Activated T-helper 2 cell treated with anti-CD3 and anti-CD28 coated beads, Interferon-gamma antibody, Interleukin-2, Interleukin-4, amounts not matched to agents 10 μg/mL and 5 μg/mL and 100 μg/mL, durations not matched to agents 14 hours and 24 hours and 36 hours (primary cell): ENCODE measurements at regions of chr2 and their contacts with region 1.

Region 1: DNA sequence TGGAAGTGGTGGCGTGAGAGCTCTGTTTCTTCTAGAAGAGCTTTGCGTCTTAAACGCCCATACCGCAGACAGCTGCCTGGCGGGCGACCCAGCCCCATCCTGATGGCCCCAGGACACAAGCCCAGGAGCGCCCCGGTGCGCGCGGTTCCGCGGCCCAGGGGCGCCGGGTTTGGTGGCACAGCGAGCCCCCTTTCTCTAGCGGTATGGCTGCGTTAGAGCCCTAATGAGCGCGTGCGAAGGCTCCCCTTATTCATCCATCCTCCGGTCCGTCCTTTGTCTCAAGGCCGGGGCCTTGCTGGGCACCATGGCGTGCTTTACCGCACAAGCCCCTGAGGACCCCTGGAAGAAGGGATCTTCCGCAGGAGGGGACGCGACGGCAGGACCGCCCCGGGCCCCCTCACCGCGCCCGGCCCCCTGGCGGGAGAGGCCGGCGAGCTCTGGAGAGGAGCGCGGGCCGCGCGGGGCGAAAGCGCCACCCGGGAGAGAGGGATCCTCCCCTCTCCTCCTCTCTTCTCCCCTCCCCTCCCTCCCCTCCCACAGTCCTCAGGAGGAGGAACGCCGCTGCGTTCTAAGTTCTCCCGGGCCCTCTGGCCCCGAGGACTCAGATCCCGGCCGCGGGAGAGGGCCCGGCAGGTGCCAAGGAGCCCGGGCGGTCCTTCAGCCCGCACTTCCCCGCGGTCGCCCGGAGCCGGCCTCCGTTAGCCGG is 626 bp upstream of the SLC1A4 start:
- DNase-seq: peak; percentile 80
- H3K4me3 Mint-ChIP-seq: peak overlapping the region; percentile 84
- H3K27ac Mint-ChIP-seq: peak overlapping the region; percentile 90
- H3K4me1 Mint-ChIP-seq: peaks cover 65% of the 10 kb centered on the region
- H3K27me3 Mint-ChIP-seq: peaks cover 3% of the 10 kb centered on the region

Region 2: DNA sequence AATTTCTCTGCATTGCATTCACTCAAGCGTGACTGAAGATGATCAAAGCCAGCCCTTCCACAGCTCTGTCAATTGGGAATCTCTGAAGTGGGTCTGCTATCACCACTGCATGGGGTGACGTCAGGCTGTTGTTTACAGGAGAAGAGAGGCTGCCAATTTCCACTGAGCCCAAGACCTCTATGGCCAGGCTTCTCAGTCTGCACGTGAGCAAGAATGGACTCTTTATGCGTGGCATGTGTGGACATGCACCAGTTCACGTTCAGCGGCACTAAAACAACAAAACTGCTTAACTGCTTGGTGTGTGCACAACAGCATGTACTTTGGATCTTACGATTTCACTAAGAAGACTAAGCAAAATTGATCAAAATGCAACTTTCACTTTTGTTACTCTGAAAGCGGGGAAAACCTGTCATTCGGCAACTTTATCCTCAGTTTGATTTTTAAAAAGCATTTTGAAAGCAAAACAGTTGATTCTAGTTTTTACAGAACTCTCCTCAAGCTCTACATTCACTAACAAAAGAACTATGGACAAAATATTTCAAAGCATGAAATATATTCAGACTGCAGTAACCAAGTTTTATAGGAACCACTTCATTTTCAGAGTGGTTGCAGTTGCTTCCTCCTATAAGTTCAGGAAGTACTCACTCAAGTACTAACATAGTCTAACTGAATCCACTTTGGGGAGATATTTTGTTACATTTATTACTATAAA is 257.9 kb before region 1 on chr2:
- intact Hi-C with region 1: loop called (anchors 10 kb)
- DNase-seq: peak; percentile 31
- H3K4me3 Mint-ChIP-seq: peak overlapping the region; percentile 76
- H3K27ac Mint-ChIP-seq: peak overlapping the region; percentile 94
- H3K4me1 Mint-ChIP-seq: peaks cover 75% of the 10 kb centered on the region
- H3K27me3 Mint-ChIP-seq: no peaks in the 10 kb centered on the region

Region 3: DNA sequence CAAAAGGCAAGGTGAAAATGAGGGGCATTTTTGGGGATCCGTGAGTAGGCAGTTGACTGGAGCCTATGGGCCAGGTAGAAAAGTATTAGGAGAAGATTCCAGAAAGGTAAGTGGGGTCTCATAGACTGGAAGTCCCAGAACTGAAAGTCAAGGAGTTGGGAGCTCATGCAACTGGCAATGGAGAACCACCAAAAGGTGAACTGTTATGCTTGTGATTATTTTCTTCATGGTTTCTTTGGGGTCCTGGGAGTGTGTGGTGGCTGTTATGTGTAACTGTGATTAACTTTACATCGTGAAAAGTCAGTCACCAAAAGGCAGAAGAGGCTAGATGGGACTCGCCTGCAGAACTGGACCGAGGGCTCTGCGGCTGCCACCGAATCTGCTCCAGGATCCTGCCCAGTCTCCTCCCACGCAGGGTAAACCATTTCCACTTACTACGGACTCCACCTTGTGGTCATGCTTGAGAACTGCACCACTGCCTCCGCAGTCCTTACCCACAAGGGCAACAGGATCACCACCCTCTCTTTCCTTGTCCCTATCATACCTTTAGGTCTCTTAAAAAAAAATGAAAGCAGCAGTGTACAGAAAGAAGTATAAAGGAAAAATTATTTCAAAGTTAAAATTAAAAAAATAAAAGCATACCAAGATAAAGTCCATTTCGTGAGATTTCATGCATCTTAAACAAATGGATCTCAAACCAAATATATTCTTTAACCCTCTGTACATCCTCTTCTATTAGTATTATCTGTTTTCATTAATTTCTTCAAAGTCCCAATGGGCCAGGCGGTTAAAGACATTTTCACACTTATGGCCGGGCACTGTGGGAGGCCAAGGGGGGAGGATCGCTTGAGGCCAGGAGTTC is 52.1 kb after region 1 on chr2:
- intact Hi-C with region 1: loop called (anchors 2 kb)
- DNase-seq: peak; percentile 69
- H3K4me3 Mint-ChIP-seq: no peak overlapping the region
- H3K27ac Mint-ChIP-seq: no peak overlapping the region
- H3K4me1 Mint-ChIP-seq: peaks cover 20% of the 10 kb centered on the region
- H3K27me3 Mint-ChIP-seq: no peaks in the 10 kb centered on the region

Region 4: DNA sequence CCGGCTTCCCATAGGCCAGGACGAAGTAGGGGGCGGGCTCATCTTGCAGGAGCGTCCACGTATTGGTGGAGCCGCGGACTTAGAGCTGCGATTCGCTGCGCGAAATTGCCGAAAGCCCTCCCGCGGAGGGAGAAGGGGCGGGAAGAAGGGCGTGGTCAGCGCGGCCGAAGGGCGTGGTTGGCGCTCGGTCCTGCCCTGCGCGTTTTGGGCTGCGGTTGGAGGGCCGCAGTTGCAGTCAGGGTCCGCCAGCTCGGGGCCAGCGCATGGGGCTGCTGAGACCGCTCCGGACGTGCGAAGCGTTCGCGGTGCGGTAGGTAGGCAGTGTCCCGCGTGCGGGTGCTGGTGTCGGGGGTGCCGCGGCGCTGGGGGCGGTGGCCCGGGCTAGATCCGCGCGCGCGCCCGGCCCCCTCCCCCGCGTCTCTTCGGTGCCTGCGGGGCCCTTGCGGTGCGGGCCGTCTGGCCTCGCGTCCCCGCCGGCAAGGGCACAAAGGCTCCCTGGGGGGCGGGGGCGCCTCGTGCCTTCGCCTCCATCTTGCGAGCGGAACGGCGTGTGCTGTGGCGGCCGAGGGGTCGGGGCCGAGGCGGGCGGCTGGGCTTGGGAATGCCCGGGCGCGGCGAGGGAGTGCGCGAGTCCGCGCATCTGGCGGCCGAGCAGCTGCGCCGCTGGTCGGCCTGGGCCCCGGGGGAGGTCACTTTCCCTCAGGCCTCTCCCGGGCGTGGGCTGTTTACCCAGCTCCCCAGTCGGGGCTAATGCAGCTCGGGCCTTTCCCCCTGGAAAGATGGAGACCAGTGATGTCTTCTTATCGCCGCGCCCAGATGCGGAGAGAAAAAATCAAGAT is 67.9 kb after region 1 on chr2 and contains the start of gene CEP68:
- intact Hi-C with region 1: loop called (anchors 2 kb)
- DNase-seq: peak; percentile 96
- H3K4me3 Mint-ChIP-seq: peak within 1 kb of the TSS; percentile 92
- H3K27ac Mint-ChIP-seq: peak within 1 kb of the TSS; percentile 73
- H3K4me1 Mint-ChIP-seq: peaks cover 52% of the 10 kb centered on the region
- H3K27me3 Mint-ChIP-seq: no peaks in the 10 kb centered on the region
- total RNA-seq, gene CEP68: 5.9 and 6.1 TPM in 2 replicates

Region 5: DNA sequence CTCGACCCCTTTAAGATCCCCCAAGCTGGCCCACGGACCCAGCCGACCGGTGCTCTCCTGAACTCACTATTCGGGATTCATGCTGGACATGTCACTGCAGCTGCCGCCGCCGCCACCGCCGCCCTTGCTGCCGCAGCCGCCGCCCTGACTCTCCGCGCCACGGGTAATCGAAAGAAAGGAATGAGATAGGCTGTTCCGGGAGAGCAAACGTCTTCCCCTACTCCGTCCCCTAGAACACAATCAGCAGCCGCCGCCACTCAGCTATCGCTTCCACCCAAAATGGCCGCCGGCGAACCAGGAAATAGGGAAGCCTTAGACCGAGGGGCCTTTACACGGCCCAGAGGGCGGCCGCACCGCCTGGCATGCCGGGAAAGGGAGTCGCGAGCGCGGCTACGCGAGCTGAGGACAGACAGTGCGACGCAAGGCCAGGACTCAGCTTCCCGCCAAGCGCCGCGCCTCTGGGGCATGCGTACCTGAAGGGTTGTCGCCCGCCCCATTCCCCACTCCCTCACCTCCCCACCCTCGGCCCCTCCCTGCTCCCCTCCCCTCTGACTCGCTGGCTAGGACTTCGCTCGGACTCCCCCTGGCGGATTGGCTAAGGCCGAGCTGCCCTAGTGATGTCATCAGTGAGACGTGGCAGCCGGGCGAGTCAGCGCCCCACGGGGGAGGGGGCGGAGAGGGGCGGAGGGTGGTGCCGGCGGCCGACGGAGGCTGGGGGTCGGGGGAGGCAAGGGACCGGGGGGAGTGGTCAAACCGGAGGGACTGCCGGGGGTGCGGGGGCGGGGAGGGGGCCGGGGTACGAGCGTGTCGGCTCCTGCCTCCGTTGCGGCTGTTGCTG is 141.5 kb after region 1 on chr2 and contains the start of gene RAB1A:
- intact Hi-C with region 1: loop called (anchors 2 kb)
- DNase-seq: peak; percentile 98
- H3K4me3 Mint-ChIP-seq: peak within 1 kb of the TSS; percentile 100
- H3K27ac Mint-ChIP-seq: peak within 1 kb of the TSS; percentile 100
- H3K4me1 Mint-ChIP-seq: peaks cover 35% of the 10 kb centered on the region
- H3K27me3 Mint-ChIP-seq: peaks cover 6% of the 10 kb centered on the region
- total RNA-seq, gene RAB1A: 88.1 and 96.6 TPM in 2 replicates

Region 6: GRCh38 chr2:65227425-65228262 is 239.1 kb after region 1 on chr2 and contains the start of gene ACTR2:
- intact Hi-C with region 1: loop called (anchors 2 kb)
- DNase-seq: peak; percentile 95
- H3K4me3 Mint-ChIP-seq: peak within 1 kb of the TSS; percentile 98
- H3K27ac Mint-ChIP-seq: peak within 1 kb of the TSS; percentile 96
- H3K4me1 Mint-ChIP-seq: peaks cover 27% of the 10 kb centered on the region
- H3K27me3 Mint-ChIP-seq: no peaks in the 10 kb centered on the region
- total RNA-seq, gene ACTR2: 339 and 350 TPM in 2 replicates